Activated T-helper 1 cell treated with anti-CD3 and anti-CD28 coated beads, Interleukin-12 subunit alpha, Interleukin-12 subunit beta, Interleukin-2, Interleukin-4 antibody, amounts not matched to agents 30 ng/mL and 10 ng/mL and 1 ng/mL, durations not matched to agents 14 hours and 24 hours and 36 hours (primary cell): ENCODE measurements at regions of chr1 and their contacts with region 1.

Region 1: GRCh38 chr1:160031365-160032164 is at the start of gene PIGM:
- DNase-seq: peak; percentile 91
- H3K4me3 Mint-ChIP-seq: peak within 1 kb of the TSS; percentile 97
- H3K27ac Mint-ChIP-seq: peak within 1 kb of the TSS; percentile 87
- H3K4me1 Mint-ChIP-seq: peaks cover 36% of the 10 kb centered on the region
- H3K27me3 Mint-ChIP-seq: peaks cover 16% of the 10 kb centered on the region
- total RNA-seq, gene PIGM: 5.4 and 5.5 TPM in 2 replicates

Region 2: DNA sequence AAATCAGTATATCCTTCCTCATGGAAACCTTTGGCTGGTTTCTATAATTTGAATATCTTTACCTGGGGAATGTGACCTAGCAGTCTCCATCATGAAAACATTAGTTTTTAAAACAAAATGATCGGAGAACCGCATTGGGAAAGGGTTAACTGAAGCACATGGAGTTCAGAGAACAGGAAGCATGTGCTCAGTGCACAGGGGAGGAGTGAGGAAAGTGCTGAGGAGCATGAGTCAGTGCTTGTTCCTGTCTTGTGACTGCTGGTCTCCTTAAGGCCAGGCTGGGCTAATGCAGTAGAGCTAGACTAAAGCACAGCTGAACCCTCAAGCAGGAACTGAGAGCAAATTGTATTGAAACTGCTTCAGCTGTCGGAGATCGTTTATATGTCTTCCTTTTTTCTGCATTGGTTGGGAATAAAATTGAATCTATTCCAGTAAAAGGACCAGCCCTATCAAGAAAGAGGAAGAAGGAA is 1016.1 kb before region 1 on chr1:
- intact Hi-C with region 1: loop called (anchors 2 kb)
- DNase-seq: peak; percentile 67
- H3K4me3 Mint-ChIP-seq: peak overlapping the region; percentile 91
- H3K27ac Mint-ChIP-seq: peak overlapping the region; percentile 87
- H3K4me1 Mint-ChIP-seq: peaks cover 71% of the 10 kb centered on the region
- H3K27me3 Mint-ChIP-seq: no peaks in the 10 kb centered on the region

Region 3: DNA sequence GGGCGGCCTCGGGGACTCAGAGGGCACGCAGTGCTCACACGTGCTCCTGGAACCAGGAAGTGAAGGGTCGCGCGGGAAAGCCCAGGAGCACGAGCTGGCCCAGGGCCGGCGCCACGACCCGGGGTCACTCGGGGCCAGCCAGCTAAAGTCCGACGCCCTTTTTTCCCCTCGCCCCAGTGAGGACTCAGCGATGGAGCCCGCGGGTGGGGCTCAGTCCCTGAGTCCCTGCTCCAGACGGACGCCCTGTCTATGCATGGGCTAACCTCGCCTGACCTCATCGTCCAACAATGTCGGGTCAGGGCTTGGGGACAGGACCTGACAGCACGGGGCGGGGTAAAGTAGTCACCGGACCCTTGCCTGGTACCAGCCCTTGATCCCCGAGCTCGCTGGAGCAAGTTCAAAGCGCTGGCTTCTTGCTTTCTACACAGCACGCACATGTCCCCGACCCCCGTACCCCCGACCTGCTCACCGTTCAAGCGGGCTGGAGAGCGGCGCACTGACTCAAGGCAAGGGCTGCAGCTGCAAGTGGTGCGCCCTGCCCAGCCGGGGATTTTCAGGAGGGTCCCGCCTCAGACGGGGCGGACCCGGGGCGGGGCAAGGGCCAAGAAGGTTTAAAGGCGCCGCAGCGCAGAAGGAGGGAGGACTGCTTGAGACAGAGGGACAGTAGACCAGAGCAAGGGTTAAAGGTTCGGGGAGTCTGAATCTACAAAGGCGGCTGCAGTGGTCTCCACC is 106.4 kb before region 1 on chr1 and contains the start of gene TAGLN2:
- intact Hi-C with region 1: loop called (anchors 1 kb)
- DNase-seq: peak; percentile 92
- H3K4me3 Mint-ChIP-seq: peak within 1 kb of the TSS; percentile 94
- H3K27ac Mint-ChIP-seq: peak within 1 kb of the TSS; percentile 99
- H3K4me1 Mint-ChIP-seq: peaks cover 57% of the 10 kb centered on the region
- H3K27me3 Mint-ChIP-seq: peaks cover 1% of the 10 kb centered on the region
- total RNA-seq, gene TAGLN2: 442 and 461 TPM in 2 replicates

Region 4: DNA sequence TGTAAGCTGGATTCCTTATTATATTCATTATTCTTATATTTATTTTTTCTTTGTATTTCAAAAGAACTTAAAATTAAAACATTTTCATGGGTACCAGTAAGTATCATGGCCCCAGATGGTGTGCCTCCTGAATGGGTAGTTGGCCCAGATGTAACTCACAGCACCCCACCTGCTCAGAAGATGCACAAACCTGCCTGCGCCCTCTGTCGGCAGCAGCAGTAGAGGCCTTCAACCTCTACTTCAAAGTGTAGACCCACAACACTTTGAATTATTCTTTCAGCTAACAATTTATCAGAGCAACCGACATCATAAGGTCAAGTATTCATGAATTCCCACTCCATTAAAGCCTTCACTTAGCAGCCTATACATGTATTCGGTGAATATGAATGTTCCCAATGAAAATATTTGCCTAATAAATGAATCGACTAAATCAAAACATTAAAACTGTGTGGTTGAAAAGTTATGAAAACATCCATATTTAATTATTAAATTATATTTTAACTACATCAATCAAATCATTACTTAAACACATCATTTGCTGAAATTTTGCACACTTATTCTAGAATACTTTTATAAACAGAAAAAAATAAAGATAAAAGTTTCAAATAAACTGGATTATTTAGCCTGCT is 25.1 kb before region 1 on chr1:
- intact Hi-C with region 1: loop called (anchors 2 kb)
- DNase-seq: peak; percentile 55
- H3K4me3 Mint-ChIP-seq: no peak overlapping the region
- H3K27ac Mint-ChIP-seq: no peak overlapping the region
- H3K4me1 Mint-ChIP-seq: no peaks in the 10 kb centered on the region
- H3K27me3 Mint-ChIP-seq: peaks cover 18% of the 10 kb centered on the region

Region 5: GRCh38 chr1:160078512-160079195 is 47.1 kb after region 1 on chr1:
- intact Hi-C with region 1: loop called (anchors 1 kb)
- DNase-seq: peak; percentile 47
- H3K4me3 Mint-ChIP-seq: no peak overlapping the region
- H3K27ac Mint-ChIP-seq: no peak overlapping the region
- H3K4me1 Mint-ChIP-seq: peaks cover 16% of the 10 kb centered on the region
- H3K27me3 Mint-ChIP-seq: peaks cover 51% of the 10 kb centered on the region

Region 6: GRCh38 chr1:160261893-160262794 is 230.6 kb after region 1 on chr1 and contains the start of gene DCAF8:
- intact Hi-C with region 1: loop called (anchors 5 kb)
- DNase-seq: peak; percentile 98
- H3K4me3 Mint-ChIP-seq: peak within 1 kb of the TSS; percentile 95
- H3K27ac Mint-ChIP-seq: peak within 1 kb of the TSS; percentile 99
- H3K4me1 Mint-ChIP-seq: peaks cover 51% of the 10 kb centered on the region
- H3K27me3 Mint-ChIP-seq: no peaks in the 10 kb centered on the region
- total RNA-seq, gene DCAF8: 112 and 117 TPM in 2 replicates